ENCODE measurements at regions of chr1 and their contacts with region 1.

Region 1: DNA sequence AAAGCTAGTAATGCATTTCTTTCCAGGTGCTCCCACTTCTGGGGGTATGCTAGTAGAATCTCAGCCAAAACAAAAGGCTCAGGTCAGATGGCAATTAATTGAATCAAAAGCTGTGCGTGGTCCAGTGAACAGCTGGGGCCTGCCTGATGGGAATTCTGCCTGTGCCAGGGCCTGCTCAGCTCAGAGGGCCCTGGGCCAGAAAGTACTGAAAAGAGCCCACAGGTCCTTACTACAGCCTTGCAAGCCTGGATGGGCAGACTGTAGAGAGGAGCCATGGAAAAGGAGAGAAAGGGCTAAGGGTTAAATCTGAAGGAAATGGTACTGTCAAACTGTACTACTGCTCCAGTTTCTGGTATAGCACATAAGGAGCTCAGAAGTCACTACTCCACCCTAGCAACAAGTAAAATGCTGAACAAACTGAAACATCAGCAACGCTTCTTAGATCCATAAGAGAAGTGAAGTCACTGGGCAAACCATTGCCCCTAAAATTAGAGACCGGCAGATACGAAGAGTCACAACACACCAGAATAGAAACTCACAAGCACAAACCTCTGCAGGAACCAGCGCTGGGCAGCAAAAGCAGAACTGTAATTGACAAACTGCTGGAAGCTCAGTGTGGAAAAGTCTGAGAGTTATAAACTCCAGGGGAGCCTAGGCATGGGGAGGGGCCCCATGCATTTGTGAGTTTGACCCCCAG is 121.1 kb upstream of the SYT6 start:
- DNase-seq: no peak
- ATAC-seq: peak; percentile 61 to 83 (median 69)
- H3K4me3 ChIP-seq: no peak overlapping the region
- H3K27ac ChIP-seq: peak overlapping the region in 3 of 12 donors; percentile 12 to 75 (median 70)
- H3K4me1 ChIP-seq: peaks cover 0 to 14% (median 5%) of the 10 kb centered on the region in 12 donors
- H3K27me3 ChIP-seq: peaks cover 0 to 4% (median 0%) of the 10 kb centered on the region in 9 donors
- CTCF ChIP-seq: no peak
- POLR2A ChIP-seq: no peak

Region 2: GRCh38 chr1:114152508-114153260 is 122.1 kb before region 1 on chr1:
- intact Hi-C with region 1: loop called in 1 of 10 experiments (anchors 10 kb)
- DNase-seq: peak in 4 of 5 donors; percentile 25 to 48 (median 39)
- ATAC-seq: peak in 3 of 4 donors; percentile 64 to 82 (median 69)
- H3K4me3 ChIP-seq: peak overlapping the region; percentile 3 to 59 (median 48)
- H3K27ac ChIP-seq: no peak overlapping the region
- H3K4me1 ChIP-seq: peaks cover 0 to 33% (median 22%) of the 10 kb centered on the region in 12 donors
- H3K27me3 ChIP-seq: peaks cover 41 to 98% (median 67%) of the 10 kb centered on the region in 9 donors
- CTCF ChIP-seq: no peak
- POLR2A ChIP-seq: no peak

Measured in heart left ventricle (tissue), 16 donors.